ENCODE measurements at regions of chr1 and their contacts with region 1.

Region 1: GRCh38 chr1:153677718-153678505 is 576 bp upstream of the NPR1 start:
- DNase-seq: peak; percentile 78
- ATAC-seq: peak; percentile 63
- H3K4me3 Mint-ChIP-seq: peak overlapping the region; percentile 87
- H3K27ac Mint-ChIP-seq: no peak overlapping the region
- H3K4me1 Mint-ChIP-seq: peaks cover 18% of the 10 kb centered on the region
- H3K27me3 Mint-ChIP-seq: peaks cover 24% of the 10 kb centered on the region
- CTCF ChIP-seq: peak; percentile 82

Region 2: GRCh38 chr1:153577624-153578051 is 100.3 kb before region 1 on chr1:
- CTCF ChIA-PET with region 1: no interaction called
- POLR2A ChIA-PET with region 1: no interaction called
- DNase-seq: no peak
- ATAC-seq: no peak
- H3K4me3 Mint-ChIP-seq: no peak overlapping the region
- H3K27ac Mint-ChIP-seq: no peak overlapping the region
- H3K4me1 Mint-ChIP-seq: peaks cover 16% of the 10 kb centered on the region
- H3K27me3 Mint-ChIP-seq: 0 out of 2 replicates have a peak, but pooled peaks cover 2% of the 10 kb centered on the region
- CTCF ChIP-seq: no peak

Region 3: GRCh38 chr1:153698020-153698931 is 20.4 kb after region 1 on chr1:
- CTCF ChIA-PET with region 1: interaction called, 22 read pairs
- POLR2A ChIA-PET with region 1: interaction called, 8 read pairs
- DNase-seq: peak; percentile 57
- ATAC-seq: peak; percentile 63
- H3K4me3 Mint-ChIP-seq: peak overlapping the region; percentile 46
- H3K27ac Mint-ChIP-seq: peak overlapping the region; percentile 80
- H3K4me1 Mint-ChIP-seq: peaks cover 25% of the 10 kb centered on the region
- H3K27me3 Mint-ChIP-seq: no peaks in the 10 kb centered on the region
- CTCF ChIP-seq: no peak

Region 4: DNA sequence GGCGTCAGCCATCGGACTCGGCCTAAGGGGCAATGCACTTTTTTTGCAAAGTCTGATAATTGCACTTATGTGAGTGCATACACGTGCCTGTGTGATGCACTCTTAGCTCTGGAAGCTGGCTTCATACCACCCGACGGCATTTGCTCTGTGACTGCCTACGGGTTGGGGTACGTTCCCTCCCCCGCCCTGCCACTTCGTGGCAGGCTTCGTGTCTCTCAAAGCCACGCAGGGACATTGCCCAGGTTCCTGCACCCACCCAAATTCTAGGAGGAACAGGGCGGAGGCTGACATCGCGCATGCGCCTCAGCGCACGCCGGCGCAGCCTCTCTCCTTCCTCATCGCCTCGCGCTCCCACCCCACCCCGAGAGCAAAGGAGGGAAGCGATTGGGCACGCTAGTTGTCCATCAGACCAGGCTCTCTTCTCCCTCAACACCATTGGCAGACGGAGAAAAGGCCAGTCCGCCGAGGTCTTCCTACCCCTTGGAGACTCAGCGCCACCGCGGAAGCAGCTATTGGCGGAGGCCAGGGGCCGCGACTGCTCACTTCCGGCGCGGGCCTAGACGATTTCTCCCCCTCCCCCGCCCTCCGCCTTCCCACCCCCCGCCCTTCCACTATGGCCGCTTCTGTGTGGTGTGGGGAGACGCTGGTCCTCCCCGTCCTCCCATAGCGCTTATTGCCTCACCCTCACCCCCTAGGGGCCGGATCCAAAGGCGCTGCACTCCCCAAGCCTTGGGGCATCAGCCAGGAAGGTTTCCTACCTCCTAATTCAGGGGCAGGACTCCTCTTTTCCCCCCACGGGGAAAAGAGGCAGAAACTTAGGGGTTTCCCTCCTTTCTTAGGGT is 49.8 kb after region 1 on chr1 and contains the start of gene INTS3:
- CTCF ChIA-PET with region 1: interaction called, 19 read pairs
- POLR2A ChIA-PET with region 1: interaction called, 10 read pairs
- DNase-seq: peak; percentile 100
- ATAC-seq: peak; percentile 100
- H3K4me3 Mint-ChIP-seq: peak within 1 kb of the TSS; percentile 97
- H3K27ac Mint-ChIP-seq: peak within 1 kb of the TSS; percentile 99
- H3K4me1 Mint-ChIP-seq: peaks cover 28% of the 10 kb centered on the region
- H3K27me3 Mint-ChIP-seq: no peaks in the 10 kb centered on the region; the same call in 1 of the 2 replicates
- CTCF ChIP-seq: no peak
- total RNA-seq, gene INTS3: 66.8 to 71.3 TPM (median 70.5 TPM) in 3 replicates

Region 5: GRCh38 chr1:153749408-153750005 is 71.6 kb after region 1 on chr1:
- CTCF ChIA-PET with region 1: interaction called, 14 read pairs
- POLR2A ChIA-PET with region 1: interaction called, 4 read pairs
- DNase-seq: peak; percentile 85
- ATAC-seq: peak; percentile 81
- H3K4me3 Mint-ChIP-seq: no peak overlapping the region
- H3K27ac Mint-ChIP-seq: peak overlapping the region; percentile 88
- H3K4me1 Mint-ChIP-seq: peaks cover 55% of the 10 kb centered on the region
- H3K27me3 Mint-ChIP-seq: no peaks in the 10 kb centered on the region
- CTCF ChIP-seq: peak; percentile 79

Region 6: GRCh38 chr1:153775458-153776327 is 97.8 kb after region 1 on chr1:
- CTCF ChIA-PET with region 1: interaction called, 52 read pairs
- POLR2A ChIA-PET with region 1: interaction called, 4 read pairs
- DNase-seq: peak; percentile 95
- ATAC-seq: peak; percentile 85
- H3K4me3 Mint-ChIP-seq: peak overlapping the region; percentile 86
- H3K27ac Mint-ChIP-seq: peak overlapping the region; percentile 74; the same call in 1 of the 2 replicates
- H3K4me1 Mint-ChIP-seq: peaks cover 36% of the 10 kb centered on the region
- H3K27me3 Mint-ChIP-seq: no peaks in the 10 kb centered on the region
- CTCF ChIP-seq: no peak

Region 7: DNA sequence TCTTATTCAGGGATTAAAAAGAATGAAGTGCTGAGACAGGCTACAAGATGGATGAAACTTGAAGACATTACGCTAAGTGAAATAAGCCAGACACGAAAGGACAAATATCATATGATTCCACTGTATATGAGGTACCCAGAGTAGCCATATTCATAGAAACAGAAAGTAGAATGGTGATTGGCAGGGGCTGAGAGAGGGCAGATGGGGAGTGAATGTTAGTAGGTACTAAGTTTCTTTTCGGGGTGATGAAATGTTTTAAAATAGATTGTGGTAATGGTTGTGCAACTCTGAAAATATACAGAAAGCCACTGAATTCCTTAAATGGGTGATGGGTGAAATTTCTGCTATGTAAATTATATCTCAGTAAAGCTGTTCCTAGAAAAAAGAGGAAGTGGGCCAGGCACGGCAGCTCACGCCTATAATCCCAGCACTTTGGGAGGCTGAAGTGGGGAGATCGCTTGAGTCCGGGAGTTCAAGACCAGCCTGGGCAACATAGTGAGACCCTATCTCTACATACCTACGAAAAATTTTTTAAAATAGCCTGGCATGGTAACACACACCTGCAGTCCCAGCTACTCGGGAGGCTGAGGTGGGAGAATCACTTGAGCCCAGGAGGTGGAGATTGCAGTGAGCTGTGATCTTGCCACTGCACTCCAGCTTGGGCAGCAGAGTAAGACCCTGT is 113.2 kb after region 1 on chr1:
- CTCF ChIA-PET with region 1: interaction called, 15 read pairs
- POLR2A ChIA-PET with region 1: no interaction called
- DNase-seq: no peak
- ATAC-seq: no peak
- H3K4me3 Mint-ChIP-seq: no peak overlapping the region
- H3K27ac Mint-ChIP-seq: no peak overlapping the region
- H3K4me1 Mint-ChIP-seq: peaks cover 24% of the 10 kb centered on the region
- H3K27me3 Mint-ChIP-seq: no peaks in the 10 kb centered on the region; the same call in 1 of the 2 replicates
- CTCF ChIP-seq: no peak